B cell (primary cell): ENCODE measurements at regions of chr11 and their contacts with region 1.

Region 1: DNA sequence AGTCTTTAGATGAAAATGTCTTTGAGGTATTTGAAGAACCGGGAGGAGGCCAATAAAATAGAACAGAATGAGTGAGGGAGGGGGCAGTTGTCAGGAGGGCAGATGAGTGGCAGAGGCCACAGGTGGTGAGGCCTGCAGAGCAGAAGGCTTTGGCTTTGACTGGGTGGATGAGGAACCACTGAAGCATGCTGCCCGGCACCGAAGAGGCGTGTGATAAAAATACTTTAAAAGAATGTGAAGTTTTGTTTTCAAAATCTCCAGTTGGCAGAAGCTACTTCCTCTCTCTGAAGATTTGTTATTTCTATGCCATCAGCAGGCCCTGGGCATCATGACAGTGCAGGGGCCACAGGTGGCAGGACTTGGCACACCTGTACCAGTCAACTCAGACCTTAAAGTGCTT is 6.3 kb downstream of the MS4A12 start:
- DNase-seq: peak; percentile 81
- ATAC-seq: peak; percentile 96
- H3K4me3 ChIP-seq: peak overlapping the region in 2 of 5 experiments; percentile 4 to 26
- H3K4me3 Mint-ChIP-seq: peak overlapping the region; percentile 51
- H3K27ac ChIP-seq: peak overlapping the region; percentile 84 to 88
- H3K27ac Mint-ChIP-seq: peak overlapping the region; percentile 79
- H3K4me1 ChIP-seq: peaks cover 27 to 35% of the 10 kb centered on the region in 2 donors
- H3K4me1 Mint-ChIP-seq: peaks cover 26% of the 10 kb centered on the region
- H3K27me3 ChIP-seq: no peaks in the 10 kb centered on the region
- H3K27me3 Mint-ChIP-seq: no peaks in the 10 kb centered on the region
- CTCF ChIP-seq: no peak

Region 2: GRCh38 chr11:60206616-60207015 is 292.2 kb before region 1 on chr11:
- CTCF ChIA-PET with region 1: no interaction called
- POLR2A ChIA-PET with region 1: no interaction called
- intact Hi-C with region 1: no loop called
- DNase-seq: no peak
- ATAC-seq: no peak
- H3K4me3 ChIP-seq: no peak overlapping the region
- H3K4me3 Mint-ChIP-seq: no peak overlapping the region
- H3K27ac ChIP-seq: no peak overlapping the region
- H3K27ac Mint-ChIP-seq: no peak overlapping the region
- H3K4me1 ChIP-seq: no peaks in the 10 kb centered on the region
- H3K4me1 Mint-ChIP-seq: peaks cover 6% of the 10 kb centered on the region
- H3K27me3 ChIP-seq: no peaks in the 10 kb centered on the region
- H3K27me3 Mint-ChIP-seq: peaks cover 3% of the 10 kb centered on the region
- CTCF ChIP-seq: no peak

Region 3: DNA sequence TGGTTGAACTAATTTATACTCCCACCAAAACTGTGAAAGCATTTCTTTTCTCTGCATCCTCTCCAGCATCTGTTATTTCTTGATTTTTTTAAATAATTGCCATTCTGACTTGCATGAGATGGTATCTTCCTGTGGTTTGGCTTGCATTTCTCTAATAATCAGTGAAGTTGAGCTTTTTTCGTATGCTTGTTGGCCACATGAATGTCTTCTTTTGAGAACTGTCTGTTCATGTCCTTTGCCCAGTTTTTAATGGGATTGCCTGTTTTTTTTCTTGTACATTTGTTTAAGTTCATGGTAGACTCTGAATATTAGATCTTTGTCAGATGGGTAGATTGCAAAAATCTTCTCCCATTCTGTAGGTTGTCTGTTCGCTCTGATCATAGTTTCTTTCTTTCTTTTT is 62.4 kb after region 1 on chr11:
- CTCF ChIA-PET with region 1: interaction called, 11 read pairs
- POLR2A ChIA-PET with region 1: no interaction called
- intact Hi-C with region 1: no loop called
- DNase-seq: no peak
- ATAC-seq: no peak
- H3K4me3 ChIP-seq: no peak overlapping the region
- H3K4me3 Mint-ChIP-seq: no peak overlapping the region
- H3K27ac ChIP-seq: no peak overlapping the region
- H3K27ac Mint-ChIP-seq: no peak overlapping the region
- H3K4me1 ChIP-seq: peaks cover 0 to 5% of the 10 kb centered on the region in 2 donors
- H3K4me1 Mint-ChIP-seq: peaks cover 6% of the 10 kb centered on the region
- H3K27me3 ChIP-seq: peaks cover 0 to 3% (median 1%) of the 10 kb centered on the region in 4 experiments
- H3K27me3 Mint-ChIP-seq: no peaks in the 10 kb centered on the region
- CTCF ChIP-seq: no peak